MCF 10A (cell line): ENCODE measurements at regions of chr6 and their contacts with region 1.

Region 1: DNA sequence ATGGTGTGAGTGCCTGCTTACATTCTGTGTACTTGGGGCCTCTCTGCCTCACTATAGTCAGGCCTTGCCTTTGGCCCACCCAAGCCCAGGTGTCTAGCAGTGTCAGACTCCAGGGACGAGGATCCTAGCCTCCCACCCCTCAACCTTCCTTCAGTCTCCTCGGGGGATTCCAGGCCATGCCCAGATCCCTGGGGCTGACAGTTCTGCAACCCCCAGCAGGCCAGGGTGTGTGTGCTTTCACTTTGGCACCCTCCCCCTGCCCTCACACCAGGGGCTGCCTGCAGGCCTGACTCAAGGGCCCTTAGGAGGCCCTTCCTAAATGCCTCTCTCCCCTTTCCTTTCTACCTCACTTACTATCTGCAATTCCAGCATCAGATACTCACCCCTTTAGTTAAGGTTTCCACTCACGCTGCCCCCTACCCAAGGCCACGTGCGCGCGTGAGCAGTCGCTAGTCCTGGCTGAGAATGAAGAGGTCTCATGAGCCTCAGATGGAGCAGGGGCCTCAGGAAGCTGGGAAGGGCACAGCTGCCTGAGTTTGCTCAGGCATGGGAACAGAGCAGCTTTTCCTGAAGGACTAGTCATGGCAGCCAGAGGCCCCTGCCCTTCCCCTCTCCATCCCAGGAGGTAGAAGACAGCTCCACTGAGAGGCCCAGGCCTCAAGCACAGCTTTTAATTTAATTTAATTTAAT is 859 bp upstream of the CLPS start:
- DNase-seq: no peak
- H3K4me3 Mint-ChIP-seq: no peak overlapping the region
- H3K27ac Mint-ChIP-seq: no peak overlapping the region
- H3K4me1 Mint-ChIP-seq: no peaks in the 10 kb centered on the region
- H3K27me3 Mint-ChIP-seq: peaks cover 8% of the 10 kb centered on the region
- CTCF ChIP-seq: no peak

Region 2: DNA sequence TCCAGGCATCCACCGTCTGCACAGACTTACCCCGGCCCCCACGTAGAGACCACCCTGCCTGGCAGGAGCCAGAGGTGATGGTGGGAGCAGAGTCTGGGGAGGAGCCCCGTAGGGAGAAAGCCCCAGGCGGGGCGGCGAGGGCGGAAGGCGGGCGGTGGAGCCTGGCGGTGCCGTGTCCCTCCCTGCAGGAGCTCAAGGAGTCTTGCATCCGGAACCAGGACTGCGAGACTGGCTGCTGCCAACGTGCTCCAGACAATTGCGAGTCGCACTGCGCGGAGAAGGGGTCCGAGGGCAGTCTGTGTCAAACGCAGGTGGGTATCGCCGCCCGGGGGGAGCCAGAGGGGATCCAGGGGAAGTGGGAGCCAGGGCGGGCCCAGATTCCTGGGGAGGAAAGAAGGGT is 11.2 kb before region 1 on chr6:
- CTCF ChIA-PET with region 1: no interaction called
- POLR2A ChIA-PET with region 1: interaction called, 12 read pairs
- intact Hi-C with region 1: no loop called
- DNase-seq: no peak
- H3K4me3 Mint-ChIP-seq: no peak overlapping the region
- H3K27ac Mint-ChIP-seq: no peak overlapping the region
- H3K4me1 Mint-ChIP-seq: peaks cover 13% of the 10 kb centered on the region
- H3K27me3 Mint-ChIP-seq: peaks cover 31% of the 10 kb centered on the region
- CTCF ChIP-seq: no peak